Common myeloid progenitor, CD34-positive (primary cell): ENCODE measurements at regions of chr4 and their contacts with region 1.

Region 1: GRCh38 chr4:61298178-61298740 is 98.1 kb downstream of the ADGRL3 start:
- DNase-seq: no peak
- H3K4me3 ChIP-seq: no peak overlapping the region
- H3K27ac ChIP-seq: no peak overlapping the region
- H3K4me1 ChIP-seq: no peaks in the 10 kb centered on the region
- H3K27me3 ChIP-seq: peaks cover 0 to 3% (median 0%) of the 10 kb centered on the region in 5 experiments

Region 2: GRCh38 chr4:60805500-60806313 is 492.6 kb before region 1 on chr4:
- CTCF ChIA-PET with region 1: interaction called, 14 read pairs
- POLR2A ChIA-PET with region 1: no interaction called
- DNase-seq: peak; percentile 11 to 59 (median 52)
- H3K4me3 ChIP-seq: no peak overlapping the region
- H3K27ac ChIP-seq: no peak overlapping the region
- H3K4me1 ChIP-seq: no peaks in the 10 kb centered on the region
- H3K27me3 ChIP-seq: no peaks in the 10 kb centered on the region

Region 3: DNA sequence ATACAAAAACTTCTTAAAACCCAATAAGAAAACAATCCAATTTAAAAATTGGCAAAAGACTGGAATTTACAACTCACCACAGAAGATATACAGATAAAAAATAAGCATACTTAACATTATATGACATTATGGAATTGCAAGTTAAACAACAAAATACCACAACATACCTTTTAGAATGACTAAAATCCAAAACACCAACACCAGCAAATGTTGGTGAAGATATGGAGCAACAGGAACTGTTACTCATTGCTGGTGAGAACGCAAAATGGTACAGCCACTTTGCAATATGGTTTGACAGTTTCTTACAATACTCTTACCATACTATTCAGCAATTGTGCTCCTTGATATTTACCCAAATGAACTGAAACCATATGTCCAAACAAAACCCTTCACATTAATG is 14.3 kb after region 1 on chr4:
- CTCF ChIA-PET with region 1: no interaction called
- POLR2A ChIA-PET with region 1: no interaction called
- DNase-seq: no peak
- H3K4me3 ChIP-seq: no peak overlapping the region
- H3K27ac ChIP-seq: no peak overlapping the region
- H3K4me1 ChIP-seq: no peaks in the 10 kb centered on the region
- H3K27me3 ChIP-seq: no peaks in the 10 kb centered on the region